CD4-positive, alpha-beta T cell (primary cell): ENCODE measurements at regions of chr10 and their contacts with region 1.

Region 1: GRCh38 chr10:89251409-89252224 is at the start of gene LIPA:
- DNase-seq: peak; percentile 89 to 99 (median 94)
- ATAC-seq: peak; percentile 97
- H3K4me3 ChIP-seq: peak within 1 kb of the TSS; percentile 72
- H3K4me3 Mint-ChIP-seq: peak within 1 kb of the TSS; percentile 92
- H3K27ac ChIP-seq: peak within 1 kb of the TSS; percentile 14 to 41
- H3K27ac Mint-ChIP-seq: peak within 1 kb of the TSS; percentile 89
- H3K4me1 ChIP-seq: peaks cover 10% of the 10 kb centered on the region
- H3K4me1 Mint-ChIP-seq: peaks cover 30% of the 10 kb centered on the region
- H3K27me3 ChIP-seq: no peaks in the 10 kb centered on the region
- H3K27me3 Mint-ChIP-seq: no peaks in the 10 kb centered on the region
- CTCF ChIP-seq: no peak
- total RNA-seq, gene LIPA: 15.6 to 16.4 TPM

Region 2: GRCh38 chr10:89238956-89239644 is 12.5 kb before region 1 on chr10:
- CTCF ChIA-PET with region 1: no interaction called
- POLR2A ChIA-PET with region 1: interaction called, 12 read pairs
- intact Hi-C with region 1: no loop called
- DNase-seq: no peak
- ATAC-seq: no peak
- H3K4me3 ChIP-seq: no peak overlapping the region
- H3K4me3 Mint-ChIP-seq: no peak overlapping the region
- H3K27ac ChIP-seq: no peak overlapping the region
- H3K27ac Mint-ChIP-seq: no peak overlapping the region
- H3K4me1 ChIP-seq: peaks cover 3% of the 10 kb centered on the region
- H3K4me1 Mint-ChIP-seq: peaks cover 11% of the 10 kb centered on the region
- H3K27me3 ChIP-seq: no peaks in the 10 kb centered on the region
- H3K27me3 Mint-ChIP-seq: no peaks in the 10 kb centered on the region
- CTCF ChIP-seq: no peak

Region 3: GRCh38 chr10:89391917-89392756 is 140.5 kb after region 1 on chr10 and contains the start of gene IFIT1:
- CTCF ChIA-PET with region 1: no interaction called
- POLR2A ChIA-PET with region 1: interaction called, 22 read pairs
- intact Hi-C with region 1: no loop called
- DNase-seq: peak in 12 of 14 experiments; percentile 6 to 92 (median 52)
- ATAC-seq: peak; percentile 94
- H3K4me3 ChIP-seq: peak within 1 kb of the TSS; percentile 60
- H3K4me3 Mint-ChIP-seq: peak within 1 kb of the TSS; percentile 93
- H3K27ac ChIP-seq: peak within 1 kb of the TSS; percentile 58 to 60
- H3K27ac Mint-ChIP-seq: peak within 1 kb of the TSS; percentile 93
- H3K4me1 ChIP-seq: peaks cover 21% of the 10 kb centered on the region
- H3K4me1 Mint-ChIP-seq: peaks cover 47% of the 10 kb centered on the region
- H3K27me3 ChIP-seq: no peaks in the 10 kb centered on the region
- H3K27me3 Mint-ChIP-seq: no peaks in the 10 kb centered on the region
- CTCF ChIP-seq: no peak
- total RNA-seq, gene IFIT1: 5.1 to 6.2 TPM

Region 4: DNA sequence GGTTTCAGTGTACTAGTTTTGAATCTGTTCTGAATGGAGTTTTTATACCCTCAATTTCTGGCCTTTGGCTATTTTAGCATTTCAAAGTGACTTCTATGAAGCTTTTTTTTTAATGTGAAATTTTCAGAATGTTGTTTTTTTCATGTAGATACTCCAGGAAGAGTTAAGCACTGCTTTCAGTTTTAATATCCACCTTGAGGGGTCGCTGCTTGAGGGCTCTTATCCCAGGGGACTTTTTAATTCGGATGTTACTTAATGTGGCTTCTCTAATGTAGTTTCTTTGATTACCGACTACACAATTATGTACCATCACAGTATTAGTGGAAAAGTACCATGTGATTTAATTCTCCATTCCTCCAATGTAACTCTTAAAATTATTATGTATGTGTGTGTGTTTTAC is 167.9 kb after region 1 on chr10:
- CTCF ChIA-PET with region 1: interaction called, 4 read pairs
- POLR2A ChIA-PET with region 1: interaction called, 35 read pairs
- intact Hi-C with region 1: loop called in 1 of 2 experiments (anchors 10 kb)
- DNase-seq: peak in 4 of 14 experiments; percentile 21 to 78 (median 60)
- ATAC-seq: peak; percentile 28
- H3K4me3 ChIP-seq: no peak overlapping the region
- H3K4me3 Mint-ChIP-seq: peak overlapping the region; percentile 63
- H3K27ac ChIP-seq: no peak overlapping the region
- H3K27ac Mint-ChIP-seq: peak overlapping the region; percentile 75
- H3K4me1 ChIP-seq: peaks cover 27% of the 10 kb centered on the region
- H3K4me1 Mint-ChIP-seq: peaks cover 60% of the 10 kb centered on the region
- H3K27me3 ChIP-seq: no peaks in the 10 kb centered on the region
- H3K27me3 Mint-ChIP-seq: no peaks in the 10 kb centered on the region
- CTCF ChIP-seq: peak; percentile 31

Region 5: GRCh38 chr10:89643431-89644331 is 392.1 kb after region 1 on chr10:
- CTCF ChIA-PET with region 1: no interaction called
- POLR2A ChIA-PET with region 1: interaction called, 5 read pairs
- intact Hi-C with region 1: loop called in 1 of 2 experiments (anchors 2 kb)
- DNase-seq: peak; percentile 7 to 87 (median 48)
- ATAC-seq: peak; percentile 84
- H3K4me3 ChIP-seq: peak overlapping the region; percentile 77
- H3K4me3 Mint-ChIP-seq: no peak overlapping the region
- H3K27ac ChIP-seq: no peak overlapping the region
- H3K27ac Mint-ChIP-seq: no peak overlapping the region
- H3K4me1 ChIP-seq: peaks cover 16% of the 10 kb centered on the region
- H3K4me1 Mint-ChIP-seq: peaks cover 8% of the 10 kb centered on the region
- H3K27me3 ChIP-seq: no peaks in the 10 kb centered on the region
- H3K27me3 Mint-ChIP-seq: no peaks in the 10 kb centered on the region
- CTCF ChIP-seq: no peak